ENCODE measurements at regions of chr2 and their contacts with region 1.

Region 1: GRCh38 chr2:140863713-140864112 is 1267.1 kb downstream of the LRP1B start:
- DNase-seq: no peak
- ATAC-seq: peak in 2 of 4 donors; percentile 34 to 56
- H3K4me3 ChIP-seq: no peak overlapping the region
- H3K27ac ChIP-seq: no peak overlapping the region
- H3K4me1 ChIP-seq: no peaks in the 10 kb centered on the region
- H3K27me3 ChIP-seq: no peaks in the 10 kb centered on the region
- CTCF ChIP-seq: peak; percentile 56

Region 2: GRCh38 chr2:139790807-139791752 is 1072.6 kb before region 1 on chr2:
- intact Hi-C with region 1: loop called in 1 of 2 experiments (anchors 10 kb)
- DNase-seq: no peak
- ATAC-seq: no peak
- H3K4me3 ChIP-seq: no peak overlapping the region
- H3K27ac ChIP-seq: no peak overlapping the region
- H3K4me1 ChIP-seq: no peaks in the 10 kb centered on the region
- H3K27me3 ChIP-seq: peaks cover 0 to 2% (median 0%) of the 10 kb centered on the region in 3 donors
- CTCF ChIP-seq: peak; percentile 20

Region 3: GRCh38 chr2:140085674-140086073 is 778.0 kb before region 1 on chr2:
- intact Hi-C with region 1: loop called in 1 of 2 experiments (anchors 5 kb)
- DNase-seq: no peak
- ATAC-seq: no peak
- H3K4me3 ChIP-seq: no peak overlapping the region
- H3K27ac ChIP-seq: no peak overlapping the region
- H3K4me1 ChIP-seq: no peaks in the 10 kb centered on the region
- H3K27me3 ChIP-seq: no peaks in the 10 kb centered on the region
- CTCF ChIP-seq: no peak

Region 4: GRCh38 chr2:141015341-141016047 is 151.8 kb after region 1 on chr2:
- intact Hi-C with region 1: no loop called
- DNase-seq: no peak
- ATAC-seq: peak in 3 of 4 donors; percentile 55 to 75 (median 74)
- H3K4me3 ChIP-seq: peak overlapping the region; percentile 17
- H3K27ac ChIP-seq: no peak overlapping the region
- H3K4me1 ChIP-seq: peaks cover 4% of the 10 kb centered on the region
- H3K27me3 ChIP-seq: no peaks in the 10 kb centered on the region
- CTCF ChIP-seq: no peak

Measured in psoas muscle (tissue), 8 donors.